ENCODE measurements at regions of chr17 and their contacts with region 1.

Region 1: GRCh38 chr17:68435876-68436842 is 21.1 kb downstream of the WIPI1 start:
- DNase-seq: peak; percentile 66 to 81 (median 72)
- ATAC-seq: peak; percentile 50 to 71 (median 68)
- H3K4me3 ChIP-seq: no peak overlapping the region
- H3K27ac ChIP-seq: peak overlapping the region in 9 of 12 donors; percentile 14 to 86 (median 54)
- H3K4me1 ChIP-seq: peaks cover 3 to 74% (median 52%) of the 10 kb centered on the region in 12 donors
- H3K27me3 ChIP-seq: no peaks in the 10 kb centered on the region
- CTCF ChIP-seq: peak; percentile 86 to 94 (median 89)
- POLR2A ChIP-seq: no peak

Region 2: GRCh38 chr17:68172461-68172954 is 263.7 kb before region 1 on chr17:
- intact Hi-C with region 1: loop called in 1 of 10 experiments (anchors 10 kb)
- DNase-seq: peak; percentile 53 to 73 (median 62)
- ATAC-seq: peak; percentile 54 to 81 (median 77)
- H3K4me3 ChIP-seq: no peak overlapping the region
- H3K27ac ChIP-seq: no peak overlapping the region
- H3K4me1 ChIP-seq: peaks cover 0 to 4% (median 0%) of the 10 kb centered on the region in 12 donors
- H3K27me3 ChIP-seq: no peaks in the 10 kb centered on the region
- CTCF ChIP-seq: peak; percentile 91 to 99 (median 97)
- POLR2A ChIP-seq: no peak

Region 3: DNA sequence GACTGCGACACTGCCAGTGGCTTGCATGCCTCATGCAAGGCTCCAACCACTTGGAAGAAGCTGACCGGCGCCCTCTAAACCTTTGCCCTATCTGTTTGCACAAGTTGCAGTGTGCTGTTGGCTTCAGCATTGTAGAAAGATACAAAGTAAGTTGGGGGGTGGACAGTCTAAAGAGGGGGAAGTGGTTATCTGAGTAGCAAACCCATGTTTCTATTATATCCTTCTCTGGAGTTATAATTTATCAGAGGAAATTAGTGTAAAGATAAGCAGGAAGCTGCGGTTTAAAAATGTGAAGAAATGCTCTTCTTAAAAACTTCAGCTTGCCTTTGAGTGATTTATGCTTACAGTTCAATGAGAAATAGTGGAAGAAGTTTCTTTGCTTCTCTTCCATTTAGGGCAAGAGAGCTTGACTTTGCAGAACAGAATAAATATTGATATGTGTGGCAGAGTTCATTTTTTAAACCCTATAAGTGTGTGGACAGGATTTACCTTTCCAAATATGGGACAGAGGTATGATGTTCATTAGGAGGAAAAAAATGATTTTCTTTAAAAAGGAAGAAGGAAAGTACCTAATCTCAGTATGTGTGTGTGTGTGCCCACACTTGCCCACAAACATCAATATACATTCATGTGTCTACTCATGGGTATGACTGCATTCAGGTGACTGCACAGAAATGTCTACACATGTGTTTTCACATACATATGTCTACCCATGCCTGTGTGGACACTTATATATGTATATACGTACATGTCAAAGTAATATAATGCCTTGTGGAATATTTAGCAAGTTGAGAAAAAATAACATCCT is 180.2 kb before region 1 on chr17:
- intact Hi-C with region 1: loop called in 4 of 10 experiments (anchors 5 to 10 kb)
- DNase-seq: no peak
- ATAC-seq: no peak
- H3K4me3 ChIP-seq: no peak overlapping the region
- H3K27ac ChIP-seq: peak overlapping the region in 1 of 12 donors; percentile 64
- H3K4me1 ChIP-seq: peaks cover 0 to 51% (median 10%) of the 10 kb centered on the region in 12 donors
- H3K27me3 ChIP-seq: no peaks in the 10 kb centered on the region
- CTCF ChIP-seq: no peak
- POLR2A ChIP-seq: no peak

Region 4: DNA sequence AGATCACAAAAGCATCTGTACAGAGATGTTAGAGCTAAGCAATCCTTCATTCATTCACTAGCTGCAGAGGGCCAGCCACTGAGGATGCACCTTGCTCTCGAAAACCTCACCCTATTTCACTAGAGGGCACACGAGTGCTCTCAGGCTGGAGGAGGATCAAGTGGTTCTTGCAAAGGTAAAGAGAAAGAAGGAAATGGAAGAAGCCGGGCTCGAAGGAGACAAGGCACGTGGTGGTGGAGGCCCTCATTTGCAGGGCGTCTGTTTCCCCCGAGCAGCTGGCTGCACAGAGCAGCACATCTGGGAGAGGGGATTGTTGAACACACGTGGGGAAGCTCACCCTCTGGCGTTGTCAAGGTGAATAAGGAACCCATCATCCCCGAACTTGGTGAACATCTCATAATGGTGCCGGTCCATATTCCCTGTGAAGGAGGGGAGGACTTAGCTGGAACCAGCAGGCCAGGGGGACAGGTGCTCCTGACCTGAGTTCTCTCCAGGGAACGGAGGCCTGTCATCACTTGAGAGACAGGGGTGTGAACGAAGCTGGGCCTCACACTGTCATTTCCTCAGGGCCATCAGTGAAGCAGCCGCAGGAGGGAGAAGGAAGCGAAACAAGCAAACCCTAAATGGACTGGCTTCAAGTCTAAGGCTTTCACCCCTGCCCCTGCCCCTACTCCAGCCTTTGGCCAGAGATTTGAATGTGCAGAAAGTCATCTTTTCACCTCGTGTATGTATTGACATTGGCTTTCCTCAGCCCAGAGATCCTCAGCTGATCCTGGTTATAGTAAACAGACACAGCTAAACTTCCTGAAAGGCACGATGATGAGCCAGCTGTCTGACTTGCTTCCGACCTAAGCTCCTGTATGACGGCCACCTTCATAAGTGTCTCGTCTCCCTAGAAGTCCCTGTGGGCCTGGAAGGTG is 103.6 kb after region 1 on chr17:
- intact Hi-C with region 1: no loop called
- DNase-seq: no peak
- ATAC-seq: peak; percentile 5 to 27 (median 16)
- H3K4me3 ChIP-seq: no peak overlapping the region
- H3K27ac ChIP-seq: peak overlapping the region in 9 of 12 donors; percentile 6 to 60 (median 39)
- H3K4me1 ChIP-seq: peaks cover 0 to 27% (median 14%) of the 10 kb centered on the region in 12 donors
- H3K27me3 ChIP-seq: no peaks in the 10 kb centered on the region
- CTCF ChIP-seq: peak in 7 of 12 donors; percentile 11 to 39 (median 27)
- POLR2A ChIP-seq: no peak

Measured in heart left ventricle (tissue), 16 donors.